ENCODE measurements at regions of chr1 and their contacts with region 1.

Region 1: DNA sequence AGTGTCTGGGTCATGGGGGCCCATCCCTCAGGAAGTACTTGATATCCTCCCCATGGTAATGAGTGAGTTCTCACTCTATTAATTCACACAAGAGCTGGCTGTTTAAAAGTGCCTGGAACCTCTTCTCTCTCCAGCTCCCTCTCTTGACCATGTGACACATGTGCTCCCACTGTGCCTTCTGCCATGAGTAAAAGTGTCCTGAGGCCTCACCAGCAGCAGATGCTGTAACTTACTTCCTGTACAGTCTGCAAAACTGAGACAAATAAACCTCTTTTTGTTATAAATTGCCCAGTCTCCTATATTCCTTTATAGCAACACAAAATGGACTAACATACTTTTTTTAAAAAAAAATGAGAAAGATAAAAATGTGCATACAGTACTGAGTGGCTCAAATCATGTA is 24.0 kb downstream of the PUM1 start:
- DNase-seq: no peak
- ATAC-seq: no peak
- H3K4me3 ChIP-seq: no peak overlapping the region
- H3K27ac ChIP-seq: no peak overlapping the region
- H3K4me1 ChIP-seq: peaks cover 12% of the 10 kb centered on the region; the same call in 1 of the 2 replicates
- H3K27me3 ChIP-seq: no peaks in the 10 kb centered on the region
- CTCF ChIP-seq: no peak
- POLR2A ChIP-seq: no peak
- RAD21 ChIP-seq: no peak

Region 2: DNA sequence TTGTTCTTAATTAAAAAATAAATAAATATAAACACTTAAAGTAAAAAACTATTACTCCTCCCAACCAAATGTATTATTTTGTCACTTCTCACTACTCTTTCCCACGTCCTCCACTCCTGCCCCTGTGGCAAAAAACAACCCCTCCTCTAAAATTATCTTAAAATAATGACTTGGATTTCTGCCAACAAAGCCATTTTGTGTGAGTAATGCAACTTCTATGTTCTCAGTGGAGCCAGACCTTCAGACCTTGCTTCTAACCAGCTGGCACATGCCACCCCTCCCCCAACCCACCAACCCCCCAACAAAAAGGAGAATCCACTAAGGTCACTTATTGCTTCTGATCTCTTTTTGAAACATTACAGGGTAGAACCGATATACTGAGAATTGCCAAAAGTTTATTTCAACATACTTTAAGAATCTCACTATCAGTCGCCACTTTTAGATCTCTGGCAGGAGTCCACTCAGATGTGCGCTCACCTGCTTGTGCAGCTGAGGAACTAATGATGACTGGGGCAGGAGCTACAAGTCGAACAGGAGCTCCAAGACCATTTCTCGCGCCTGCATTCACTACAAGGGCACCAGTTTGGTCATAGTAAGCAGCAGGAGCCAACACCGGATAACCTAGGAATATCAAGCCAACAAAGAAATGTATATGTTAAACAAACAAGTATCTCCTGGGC is 74.7 kb before region 1 on chr1:
- CTCF ChIA-PET with region 1: no interaction called
- POLR2A ChIA-PET with region 1: no interaction called
- dilution Hi-C with region 1: no loop called
- in situ Hi-C with region 1: no loop called
- intact Hi-C with region 1: no loop called
- DNase-seq: peak; percentile 70
- ATAC-seq: peak; percentile 69
- H3K4me3 ChIP-seq: no peak overlapping the region
- H3K27ac ChIP-seq: peak overlapping the region; percentile 18; the same call in 1 of the 2 replicates
- H3K4me1 ChIP-seq: peaks cover 13% of the 10 kb centered on the region
- H3K27me3 ChIP-seq: no peaks in the 10 kb centered on the region
- CTCF ChIP-seq: no peak
- POLR2A ChIP-seq: no peak
- RAD21 ChIP-seq: no peak

Region 3: GRCh38 chr1:30977105-30977504 is 64.4 kb before region 1 on chr1:
- CTCF ChIA-PET with region 1: no interaction called
- POLR2A ChIA-PET with region 1: interaction called, 10 read pairs
- dilution Hi-C with region 1: no loop called
- in situ Hi-C with region 1: no loop called
- intact Hi-C with region 1: no loop called
- DNase-seq: peak; percentile 76
- ATAC-seq: peak; percentile 74
- H3K4me3 ChIP-seq: no peak overlapping the region
- H3K27ac ChIP-seq: no peak overlapping the region
- H3K4me1 ChIP-seq: peaks cover 7% of the 10 kb centered on the region; the same call in 1 of the 2 replicates
- H3K27me3 ChIP-seq: no peaks in the 10 kb centered on the region
- CTCF ChIP-seq: no peak
- POLR2A ChIP-seq: no peak
- RAD21 ChIP-seq: no peak